ENCODE measurements at regions of chrX and their contacts with region 1.

Region 1: DNA sequence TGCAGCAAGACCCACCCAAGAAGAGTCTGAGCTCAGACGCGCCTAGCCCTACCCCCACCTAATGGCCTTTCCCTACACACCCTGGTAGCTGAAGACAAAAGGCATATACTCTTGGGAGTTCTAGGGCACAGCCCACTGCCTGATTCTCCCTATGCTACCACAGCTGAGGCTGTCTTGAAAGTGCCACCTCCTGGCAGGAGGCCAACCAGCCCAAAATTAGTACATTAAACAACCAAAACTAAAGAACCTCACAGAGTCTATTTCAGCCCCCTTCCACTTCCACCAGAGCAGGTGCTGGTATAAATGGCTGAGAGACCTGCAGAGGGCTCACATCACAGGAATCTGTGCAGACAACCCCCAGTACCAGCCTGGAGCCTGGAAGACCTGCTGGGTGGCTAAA is 119.1 kb downstream of the HMGN5 start:
- DNase-seq: no peak
- H3K4me3 ChIP-seq: no peak overlapping the region
- H3K27ac ChIP-seq: no peak overlapping the region
- H3K4me1 ChIP-seq: no peaks in the 10 kb centered on the region
- H3K27me3 ChIP-seq: no peaks in the 10 kb centered on the region
- CTCF ChIP-seq: no peak
- EP300 ChIP-seq: no peak
- POLR2A ChIP-seq: no peak

Region 2: GRCh38 chrX:81779701-81780100 is 697.1 kb after region 1 on chrX:
- in situ Hi-C with region 1: no loop called
- intact Hi-C with region 1: loop called (anchors 5 kb)
- DNase-seq: no peak
- H3K4me3 ChIP-seq: no peak overlapping the region
- H3K27ac ChIP-seq: no peak overlapping the region
- H3K4me1 ChIP-seq: no peaks in the 10 kb centered on the region
- H3K27me3 ChIP-seq: no peaks in the 10 kb centered on the region
- CTCF ChIP-seq: no peak
- EP300 ChIP-seq: no peak
- POLR2A ChIP-seq: no peak